Ovary (tissue), 10 donors: ENCODE measurements at regions of chr1 and their contacts with region 1.

Region 1: DNA sequence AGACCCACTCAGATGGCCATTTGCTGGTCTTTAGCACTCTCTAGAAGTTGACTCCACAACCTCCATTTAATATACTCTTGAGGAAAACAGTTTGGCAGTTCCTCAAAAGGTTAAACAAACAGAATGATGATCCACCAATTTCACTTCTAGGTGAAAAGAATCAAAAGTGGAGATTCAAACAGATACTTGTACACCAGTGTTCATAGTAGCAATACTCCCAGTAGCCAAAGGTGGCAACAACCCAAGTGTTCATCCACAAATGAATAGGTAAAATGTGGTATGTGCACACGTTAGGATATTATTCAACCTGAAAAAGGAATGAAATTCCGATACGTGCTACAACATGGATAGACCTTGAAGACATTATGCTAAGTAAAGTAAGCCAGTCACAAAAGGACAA is 6.3 kb downstream of the PRCC start:
- DNase-seq: no peak
- H3K4me3 ChIP-seq: no peak overlapping the region
- H3K27ac ChIP-seq: no peak overlapping the region
- H3K4me1 ChIP-seq: peaks cover 10% of the 10 kb centered on the region
- H3K27me3 ChIP-seq: no peaks in the 10 kb centered on the region
- CTCF ChIP-seq: no peak
- EP300 ChIP-seq: no peak
- POLR2A ChIP-seq: no peak

Region 2: DNA sequence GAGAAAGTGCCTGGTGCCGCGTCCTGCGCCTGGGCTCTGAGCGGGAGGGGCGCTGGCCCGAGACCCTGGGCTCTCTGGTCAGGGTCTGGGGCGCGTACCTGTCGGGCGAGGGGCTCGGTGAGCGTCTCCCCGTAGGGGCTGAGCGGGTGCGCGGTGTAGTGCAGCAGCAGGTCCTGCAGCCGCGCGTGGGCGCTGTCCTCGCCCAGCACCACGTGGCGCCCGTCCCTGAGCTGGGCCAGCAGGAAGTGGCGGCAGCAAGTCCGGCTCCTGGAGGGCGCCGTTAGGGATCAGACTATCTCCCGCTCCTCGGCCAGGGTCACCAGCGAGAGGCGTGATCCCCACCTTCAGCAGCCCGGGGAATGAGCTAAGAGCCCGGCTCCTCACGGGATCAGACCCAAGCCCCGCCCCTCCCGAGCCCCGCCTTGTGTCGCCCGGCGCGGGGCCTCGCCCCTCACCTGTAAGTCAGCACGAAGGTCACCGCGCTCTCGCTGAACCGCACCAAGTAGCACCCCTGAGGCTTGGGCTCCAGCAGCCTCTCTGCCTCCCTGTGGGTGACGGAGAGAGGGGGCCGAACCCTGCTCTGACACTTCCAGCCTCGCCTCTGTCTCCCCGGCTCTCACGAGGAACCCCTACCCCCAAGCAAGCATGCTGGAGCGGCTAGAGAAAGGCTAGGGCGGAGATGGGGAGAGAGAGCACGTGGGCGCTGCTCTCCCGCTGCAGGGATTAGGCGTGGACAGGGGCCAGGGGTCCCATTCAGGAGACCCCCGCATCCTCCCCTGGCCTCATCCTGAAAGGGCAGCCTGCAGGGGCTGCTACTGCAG is 40.4 kb after region 1 on chr1:
- intact Hi-C with region 1: no loop called
- DNase-seq: peak; percentile 54 to 77 (median 64)
- H3K4me3 ChIP-seq: peak overlapping the region; percentile 37
- H3K27ac ChIP-seq: peak overlapping the region in 1 of 2 donors; percentile 15
- H3K4me1 ChIP-seq: peaks cover 5% of the 10 kb centered on the region
- H3K27me3 ChIP-seq: no peaks in the 10 kb centered on the region
- CTCF ChIP-seq: peak; percentile 38 to 57 (median 52)
- EP300 ChIP-seq: no peak
- POLR2A ChIP-seq: no peak

Region 3: GRCh38 chr1:157147906-157148717 is 374.5 kb after region 1 on chr1:
- intact Hi-C with region 1: loop called in 1 of 4 experiments (anchors 5 kb)
- DNase-seq: no peak
- H3K4me3 ChIP-seq: no peak overlapping the region
- H3K27ac ChIP-seq: no peak overlapping the region
- H3K4me1 ChIP-seq: no peaks in the 10 kb centered on the region
- H3K27me3 ChIP-seq: no peaks in the 10 kb centered on the region
- CTCF ChIP-seq: no peak
- EP300 ChIP-seq: no peak
- POLR2A ChIP-seq: no peak